ENCODE measurements at regions of chr1 and their contacts with region 1.

Region 1: DNA sequence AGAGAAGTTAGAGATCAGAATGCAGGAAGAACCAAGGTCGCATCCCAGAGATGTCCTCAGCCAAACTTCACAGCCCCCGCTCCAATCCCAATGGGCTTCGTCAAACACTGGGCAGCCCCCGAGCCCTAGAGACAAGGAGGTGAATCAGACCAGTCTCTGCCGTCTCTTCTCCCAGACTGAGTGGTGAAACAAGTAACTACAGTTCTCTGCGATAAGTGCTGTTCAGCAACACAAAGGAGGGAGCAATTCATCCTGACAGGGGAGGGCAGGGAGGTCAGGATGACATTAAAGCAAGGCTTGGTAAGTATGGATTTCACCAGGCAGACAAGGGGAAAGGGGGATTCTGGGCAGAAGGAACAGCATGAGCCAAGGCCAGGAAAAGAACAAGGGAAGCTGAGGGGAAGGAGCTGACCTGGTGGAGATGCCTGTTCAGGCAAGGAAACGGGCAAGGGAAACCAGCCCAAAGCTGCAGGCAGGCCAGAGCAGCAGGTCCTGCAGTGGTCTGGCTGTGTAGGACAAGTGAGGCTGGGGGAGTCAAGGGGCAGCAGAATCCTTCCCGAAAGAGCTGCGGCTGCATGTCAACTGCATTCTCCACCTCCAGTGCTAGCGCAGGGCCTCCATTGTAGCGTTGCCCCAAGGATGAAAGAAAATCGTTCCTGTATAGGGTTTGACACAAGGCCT is 13.6 kb upstream of the ERI3 start:
- DNase-seq: no peak
- ATAC-seq: no peak
- H3K4me3 ChIP-seq: no peak overlapping the region
- H3K27ac ChIP-seq: no peak overlapping the region
- H3K4me1 ChIP-seq: no peaks in the 10 kb centered on the region
- H3K27me3 ChIP-seq: no peaks in the 10 kb centered on the region
- CTCF ChIP-seq: no peak

Region 2: DNA sequence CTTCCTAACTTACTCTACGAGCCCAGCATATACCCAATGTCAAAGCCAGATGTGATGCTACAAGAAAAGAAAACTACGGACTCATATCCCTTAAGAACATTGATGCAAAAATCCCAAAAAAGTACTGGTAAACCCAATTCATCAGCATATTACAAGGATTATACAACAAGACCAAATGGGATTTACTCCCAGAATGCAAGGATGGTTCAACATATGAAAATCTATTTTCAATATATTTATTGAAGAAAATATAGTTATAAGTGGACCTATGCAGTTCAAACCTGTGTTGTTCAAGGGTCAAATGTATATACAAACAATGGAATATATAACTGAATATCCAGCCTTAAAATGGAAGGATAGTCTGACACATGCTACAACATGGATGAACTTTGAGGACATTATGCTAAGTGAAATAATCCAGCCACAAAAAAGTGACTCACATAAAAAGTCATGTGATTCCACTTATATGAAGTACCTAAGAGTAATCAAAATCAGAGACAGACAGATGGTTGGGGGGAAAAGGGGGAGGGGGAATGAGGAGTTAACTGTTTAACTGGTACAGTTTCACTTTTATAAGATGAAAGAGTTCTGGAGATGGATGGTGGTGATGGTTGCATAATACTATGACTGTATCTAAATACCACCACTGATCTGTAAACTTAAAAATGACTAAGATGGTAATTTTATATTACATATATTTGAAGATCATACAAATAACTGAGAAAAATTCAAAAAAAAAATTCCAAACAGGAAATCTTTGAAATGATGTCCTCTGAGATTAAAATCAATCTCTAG is 223.5 kb before region 1 on chr1:
- CTCF ChIA-PET with region 1: no interaction called
- POLR2A ChIA-PET with region 1: no interaction called
- in situ Hi-C with region 1: no loop called
- intact Hi-C with region 1: no loop called
- DNase-seq: no peak
- ATAC-seq: no peak
- H3K4me3 ChIP-seq: no peak overlapping the region
- H3K27ac ChIP-seq: no peak overlapping the region
- H3K4me1 ChIP-seq: no peaks in the 10 kb centered on the region
- H3K27me3 ChIP-seq: no peaks in the 10 kb centered on the region
- CTCF ChIP-seq: no peak

Region 3: GRCh38 chr1:44294588-44295007 is 74.0 kb before region 1 on chr1:
- CTCF ChIA-PET with region 1: no interaction called
- POLR2A ChIA-PET with region 1: no interaction called
- in situ Hi-C with region 1: no loop called
- intact Hi-C with region 1: no loop called
- DNase-seq: no peak
- ATAC-seq: peak; percentile 52; the same call in 1 of the 2 replicates
- H3K4me3 ChIP-seq: no peak overlapping the region
- H3K27ac ChIP-seq: no peak overlapping the region
- H3K4me1 ChIP-seq: no peaks in the 10 kb centered on the region
- H3K27me3 ChIP-seq: no peaks in the 10 kb centered on the region
- CTCF ChIP-seq: no peak; the same call in 1 of the 2 replicates

Region 4: DNA sequence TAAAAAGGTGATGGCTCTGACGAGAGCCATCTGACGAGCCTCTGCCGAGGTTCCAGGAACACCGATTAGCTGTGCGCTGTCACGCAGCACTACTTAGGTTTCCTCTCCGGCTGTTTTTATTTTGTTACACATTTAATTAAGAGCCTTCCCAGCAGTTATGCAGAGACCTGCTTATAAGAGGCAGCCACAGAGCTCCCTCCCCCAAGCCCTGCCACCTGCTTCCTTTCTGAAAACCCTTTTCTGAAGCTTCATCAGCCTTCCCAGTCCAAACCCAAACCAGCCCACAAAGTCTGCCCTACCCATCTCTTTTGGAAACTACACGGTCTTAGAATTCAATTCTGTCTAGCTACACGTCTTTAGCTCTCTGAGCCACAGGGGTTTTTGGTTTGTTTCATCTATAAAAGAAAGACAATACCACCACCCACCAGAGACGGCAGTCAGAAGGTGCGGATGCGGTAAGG is 62.6 kb before region 1 on chr1:
- CTCF ChIA-PET with region 1: no interaction called
- POLR2A ChIA-PET with region 1: no interaction called
- in situ Hi-C with region 1: no loop called
- intact Hi-C with region 1: no loop called
- DNase-seq: no peak
- ATAC-seq: no peak
- H3K4me3 ChIP-seq: no peak overlapping the region
- H3K27ac ChIP-seq: no peak overlapping the region
- H3K4me1 ChIP-seq: no peaks in the 10 kb centered on the region; the same call in 1 of the 2 replicates
- H3K27me3 ChIP-seq: no peaks in the 10 kb centered on the region
- CTCF ChIP-seq: no peak

Region 5: DNA sequence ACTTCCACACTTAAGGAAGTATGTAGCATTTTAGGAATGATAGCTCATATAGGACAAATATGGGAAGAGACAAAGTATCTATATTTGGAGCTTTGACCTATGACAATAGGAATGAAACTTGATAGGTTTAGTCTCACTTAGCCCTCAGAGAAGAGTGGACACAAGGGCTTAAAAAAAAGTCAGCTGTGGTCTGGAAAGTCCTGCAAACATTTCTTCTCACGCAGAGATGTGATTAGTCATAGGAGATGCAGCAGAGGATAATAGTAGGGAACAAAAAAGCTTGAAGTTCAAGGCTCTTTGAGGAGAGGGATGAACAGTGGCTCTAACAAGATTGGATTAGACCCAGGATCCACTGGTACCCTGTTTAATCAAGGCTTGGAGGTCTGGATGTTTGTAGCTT is 21.7 kb after region 1 on chr1:
- CTCF ChIA-PET with region 1: no interaction called
- POLR2A ChIA-PET with region 1: interaction called, 13 read pairs
- in situ Hi-C with region 1: no loop called
- intact Hi-C with region 1: no loop called
- DNase-seq: peak; percentile 27
- ATAC-seq: 0 out of 2 replicates have a peak, but pooled peaks have one; percentile 53
- H3K4me3 ChIP-seq: no peak overlapping the region
- H3K27ac ChIP-seq: no peak overlapping the region
- H3K4me1 ChIP-seq: no peaks in the 10 kb centered on the region
- H3K27me3 ChIP-seq: peaks cover 5% of the 10 kb centered on the region
- CTCF ChIP-seq: no peak